ENCODE measurements at regions of chr3 and their contacts with region 1.

Region 1: DNA sequence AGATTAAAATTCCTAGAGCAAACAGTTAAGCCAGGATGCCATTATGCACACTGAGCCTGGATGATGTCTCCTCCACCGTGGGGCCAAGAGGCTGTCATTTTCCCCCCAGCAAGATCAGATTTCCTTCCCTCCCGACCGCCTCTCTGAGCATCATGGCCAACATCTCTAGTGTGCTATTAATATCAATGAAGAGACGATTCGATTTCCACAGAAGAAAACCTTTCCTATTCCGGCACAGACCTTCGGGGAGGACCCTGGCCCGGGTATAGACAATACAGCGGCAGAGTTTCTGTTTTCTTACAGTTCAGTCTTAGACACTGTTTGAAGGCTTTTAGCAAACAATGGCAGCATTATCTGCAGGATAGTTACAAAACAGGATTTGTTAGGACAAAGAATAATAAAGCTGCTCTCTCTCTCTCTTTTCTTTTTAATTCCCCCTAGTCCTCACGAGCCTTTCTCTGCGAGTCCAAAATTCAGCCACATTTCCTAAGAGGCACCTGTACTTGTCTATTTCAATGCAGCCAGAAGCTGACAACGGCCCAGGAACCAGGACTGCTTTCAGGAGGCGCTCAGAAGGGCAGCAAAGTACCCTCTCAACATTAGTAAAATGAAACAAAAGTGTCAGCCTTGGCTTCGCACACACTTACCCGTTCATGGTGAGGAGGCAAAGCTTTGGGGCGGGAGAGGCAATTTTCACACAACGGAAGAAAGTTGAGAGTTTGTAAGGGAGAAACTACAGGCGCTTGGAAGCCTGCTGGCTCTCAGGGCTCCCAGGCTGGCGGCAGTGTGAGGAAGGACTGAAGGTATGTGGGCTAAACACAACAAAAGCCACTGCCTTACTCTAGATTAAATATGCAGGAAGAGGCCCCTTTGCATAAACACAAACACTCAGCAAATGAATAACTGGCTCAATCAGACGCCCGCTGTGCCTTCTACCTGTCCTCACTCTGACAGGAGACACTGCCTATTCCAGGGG is 278.0 kb downstream of the FOXP1 start:
- DNase-seq: peak in 1 of 2 donors; percentile 50
- ATAC-seq: peak; percentile 79 to 91
- H3K4me3 ChIP-seq: peak overlapping the region; percentile 36 to 55 (median 52)
- H3K27ac ChIP-seq: peak overlapping the region; percentile 69 to 79 (median 76)
- H3K4me1 ChIP-seq: peaks cover 27 to 34% of the 10 kb centered on the region in 2 donors
- H3K27me3 ChIP-seq: no peaks in the 10 kb centered on the region
- CTCF ChIP-seq: no peak
- POLR2A ChIP-seq: no peak

Region 2: GRCh38 chr3:71006810-71007785 is 298.4 kb before region 1 on chr3:
- in situ Hi-C with region 1: no loop called
- intact Hi-C with region 1: loop called (anchors 5 kb)
- DNase-seq: no peak
- ATAC-seq: peak; percentile 77 to 80
- H3K4me3 ChIP-seq: peak overlapping the region in 1 of 4 donors; percentile 27
- H3K27ac ChIP-seq: peak overlapping the region; percentile 48 to 69 (median 52)
- H3K4me1 ChIP-seq: peaks cover 49 to 57% of the 10 kb centered on the region in 2 donors
- H3K27me3 ChIP-seq: no peaks in the 10 kb centered on the region
- CTCF ChIP-seq: peak in 4 of 5 experiments; percentile 27 to 65 (median 45)
- POLR2A ChIP-seq: no peak

Region 3: GRCh38 chr3:71069797-71070196 is 235.7 kb before region 1 on chr3:
- in situ Hi-C with region 1: no loop called
- intact Hi-C with region 1: loop called (anchors 5 kb)
- DNase-seq: peak; percentile 15 to 35
- ATAC-seq: no peak
- H3K4me3 ChIP-seq: no peak overlapping the region
- H3K27ac ChIP-seq: no peak overlapping the region
- H3K4me1 ChIP-seq: peaks cover 20 to 26% of the 10 kb centered on the region in 2 donors
- H3K27me3 ChIP-seq: no peaks in the 10 kb centered on the region
- CTCF ChIP-seq: peak in 4 of 5 experiments; percentile 27 to 46 (median 32)
- POLR2A ChIP-seq: no peak

Region 4: GRCh38 chr3:71227270-71227661 is 78.3 kb before region 1 on chr3:
- in situ Hi-C with region 1: no loop called
- intact Hi-C with region 1: no loop called
- DNase-seq: no peak
- ATAC-seq: no peak
- H3K4me3 ChIP-seq: peak overlapping the region in 3 of 4 donors; percentile 28 to 56 (median 44)
- H3K27ac ChIP-seq: peak overlapping the region in 3 of 4 donors; percentile 49 to 59 (median 52)
- H3K4me1 ChIP-seq: peaks cover 7 to 19% of the 10 kb centered on the region in 2 donors
- H3K27me3 ChIP-seq: no peaks in the 10 kb centered on the region
- CTCF ChIP-seq: no peak
- POLR2A ChIP-seq: no peak

Region 5: DNA sequence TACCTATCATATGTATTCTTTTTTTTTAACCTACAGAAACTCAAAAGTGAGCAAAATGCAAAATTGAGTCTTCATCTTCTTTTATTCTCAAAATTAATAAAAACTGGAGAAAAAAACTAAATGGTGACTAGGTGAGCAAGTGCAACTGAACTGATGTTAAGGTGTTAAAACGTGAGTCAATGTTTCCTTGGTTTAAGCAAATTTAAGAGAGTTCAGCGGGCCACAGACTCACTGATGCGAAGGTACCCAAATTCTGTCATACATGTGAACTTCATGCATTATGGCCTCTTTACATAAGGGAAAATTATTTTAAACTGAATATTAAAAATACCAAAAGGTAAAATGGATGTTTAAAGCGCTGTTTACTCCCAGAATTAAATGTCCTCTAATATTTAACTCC is 71.4 kb after region 1 on chr3:
- in situ Hi-C with region 1: no loop called
- intact Hi-C with region 1: loop called (anchors 5 kb)
- DNase-seq: no peak
- ATAC-seq: no peak
- H3K4me3 ChIP-seq: no peak overlapping the region
- H3K27ac ChIP-seq: no peak overlapping the region
- H3K4me1 ChIP-seq: peaks cover 4 to 11% of the 10 kb centered on the region in 2 donors
- H3K27me3 ChIP-seq: no peaks in the 10 kb centered on the region
- CTCF ChIP-seq: no peak
- POLR2A ChIP-seq: no peak